Activated CD4-positive, alpha-beta T cell treated with anti-CD3 and anti-CD28 coated beads for 36 hours (primary cell): ENCODE measurements at regions of chr7 and their contacts with region 1.

Region 1: DNA sequence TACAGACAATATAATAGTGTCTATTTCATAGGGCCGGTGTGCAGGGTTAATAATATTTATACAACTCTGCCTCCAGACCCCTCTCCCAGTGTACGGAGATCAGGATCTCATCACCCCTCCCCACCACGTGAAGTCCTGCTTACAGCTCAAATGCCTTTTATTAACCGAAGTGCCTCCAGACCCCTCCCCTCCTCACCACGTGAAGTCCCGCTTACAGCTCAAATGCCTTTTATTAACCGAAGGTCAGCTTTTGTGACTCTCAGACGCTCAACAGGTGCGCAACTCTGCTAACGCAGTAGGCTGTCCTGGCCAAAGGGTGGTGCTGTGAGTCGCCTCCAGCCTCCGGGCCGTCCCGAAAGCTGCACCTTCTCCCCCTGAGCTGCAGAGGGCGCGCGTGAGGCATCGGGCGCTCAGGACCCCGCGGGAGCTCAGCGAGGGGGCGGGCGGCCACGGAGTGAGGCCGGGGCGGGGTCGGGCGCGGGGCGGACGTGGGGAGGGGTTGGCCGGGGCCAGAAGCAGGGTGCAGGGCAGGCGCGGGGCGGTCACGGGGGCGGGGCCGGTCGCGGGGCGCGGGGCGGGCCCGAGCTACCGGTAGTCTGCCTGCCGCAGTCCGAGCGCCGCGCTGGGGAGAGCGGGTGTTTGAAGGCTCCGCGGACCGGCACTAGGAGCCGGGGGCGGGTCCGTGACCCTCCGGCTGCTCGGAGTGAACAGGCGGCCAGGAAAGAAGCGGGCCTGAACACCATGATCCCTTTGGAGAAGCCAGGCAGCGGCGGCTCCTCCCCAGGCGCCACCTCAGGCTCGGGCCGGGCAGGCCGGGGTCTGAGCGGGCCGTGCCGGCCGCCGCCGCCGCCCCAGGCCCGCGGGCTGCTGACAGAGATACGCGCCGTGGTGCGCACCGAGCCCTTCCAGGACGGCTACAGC is at the start of gene STK17A:
- DNase-seq: peak; percentile 96
- ATAC-seq: peak; percentile 77
- H3K4me3 Mint-ChIP-seq: peak within 1 kb of the TSS; percentile 99
- H3K27ac Mint-ChIP-seq: peak within 1 kb of the TSS; percentile 97
- H3K4me1 Mint-ChIP-seq: peaks cover 29% of the 10 kb centered on the region
- H3K27me3 Mint-ChIP-seq: peaks cover 6% of the 10 kb centered on the region
- total RNA-seq, gene STK17A: 43.2 to 50.9 TPM

Region 2: DNA sequence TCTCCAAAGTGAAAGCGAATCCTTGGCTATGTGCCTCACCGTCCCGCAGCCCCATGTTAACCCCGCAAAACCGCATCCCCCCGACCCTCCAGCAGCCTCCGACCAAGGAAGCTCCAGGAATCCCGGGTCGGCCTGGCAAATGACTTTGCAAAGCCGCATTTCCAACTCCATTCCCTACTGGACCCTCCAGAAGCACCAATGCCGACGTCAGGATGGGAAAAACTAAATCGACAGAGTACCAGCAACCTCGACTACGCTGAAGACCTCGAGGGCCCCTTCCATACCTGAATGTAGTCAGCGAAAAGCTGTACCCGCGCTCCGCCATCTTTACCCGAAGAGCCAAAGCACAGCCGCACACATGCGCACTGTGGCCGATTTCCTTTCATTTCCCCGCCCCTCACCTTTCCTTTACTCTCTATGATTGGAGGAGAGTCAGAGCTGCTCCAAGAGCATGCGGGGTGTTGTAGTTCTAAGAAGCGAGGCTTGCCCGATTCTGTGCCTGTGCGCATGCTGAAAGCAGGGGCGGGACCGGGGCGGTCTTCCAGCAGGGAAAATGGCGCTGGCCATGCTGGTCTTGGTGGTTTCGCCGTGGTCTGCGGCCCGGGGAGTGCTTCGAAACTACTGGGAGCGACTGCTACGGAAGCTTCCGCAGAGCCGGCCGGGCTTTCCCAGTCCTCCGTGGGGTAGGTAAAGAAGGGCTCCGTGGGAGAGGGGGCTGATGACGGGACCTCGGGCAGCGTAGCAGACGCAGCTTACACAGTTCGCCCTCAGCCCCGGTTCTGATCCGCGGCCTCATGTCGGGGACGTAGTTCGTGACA is 650.7 kb before region 1 on chr7 and contains the starts of genes MRPL32 and PSMA2:
- CTCF ChIA-PET with region 1: no interaction called
- POLR2A ChIA-PET with region 1: no interaction called
- intact Hi-C with region 1: loop called in 1 of 2 experiments (anchors 1 kb)
- DNase-seq: peak; percentile 95
- ATAC-seq: peak; percentile 100
- H3K4me3 Mint-ChIP-seq: peak within 1 kb of the TSS; percentile 98
- H3K27ac Mint-ChIP-seq: peak within 1 kb of the TSS; percentile 100
- H3K4me1 Mint-ChIP-seq: peaks cover 67% of the 10 kb centered on the region
- H3K27me3 Mint-ChIP-seq: no peaks in the 10 kb centered on the region
- total RNA-seq, gene MRPL32: 74.7 to 75.5 TPM
- total RNA-seq, gene PSMA2: 109 to 217 TPM

Region 3: DNA sequence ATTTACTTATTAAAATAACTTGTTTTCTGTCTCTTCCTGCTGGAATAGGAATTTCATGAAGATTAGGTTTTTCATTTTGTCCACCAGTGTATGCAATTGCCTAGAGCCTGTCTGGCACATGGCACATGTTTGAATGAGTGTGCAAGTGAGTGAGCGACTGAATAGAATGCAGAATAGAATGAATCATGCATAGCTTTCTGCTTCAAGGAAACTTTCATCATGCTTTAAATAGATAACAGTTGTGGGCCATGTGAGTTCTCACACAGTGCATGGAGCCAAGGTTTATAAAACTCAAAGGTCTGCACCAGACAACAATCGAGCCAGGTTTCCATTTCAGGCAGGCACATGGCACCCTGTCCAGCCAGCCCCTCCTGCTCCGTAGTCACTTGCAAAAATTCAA is 544.5 kb before region 1 on chr7:
- CTCF ChIA-PET with region 1: no interaction called
- POLR2A ChIA-PET with region 1: no interaction called
- intact Hi-C with region 1: no loop called
- DNase-seq: no peak
- ATAC-seq: no peak
- H3K4me3 Mint-ChIP-seq: no peak overlapping the region
- H3K27ac Mint-ChIP-seq: no peak overlapping the region
- H3K4me1 Mint-ChIP-seq: no peaks in the 10 kb centered on the region
- H3K27me3 Mint-ChIP-seq: peaks cover 15% of the 10 kb centered on the region

Region 4: DNA sequence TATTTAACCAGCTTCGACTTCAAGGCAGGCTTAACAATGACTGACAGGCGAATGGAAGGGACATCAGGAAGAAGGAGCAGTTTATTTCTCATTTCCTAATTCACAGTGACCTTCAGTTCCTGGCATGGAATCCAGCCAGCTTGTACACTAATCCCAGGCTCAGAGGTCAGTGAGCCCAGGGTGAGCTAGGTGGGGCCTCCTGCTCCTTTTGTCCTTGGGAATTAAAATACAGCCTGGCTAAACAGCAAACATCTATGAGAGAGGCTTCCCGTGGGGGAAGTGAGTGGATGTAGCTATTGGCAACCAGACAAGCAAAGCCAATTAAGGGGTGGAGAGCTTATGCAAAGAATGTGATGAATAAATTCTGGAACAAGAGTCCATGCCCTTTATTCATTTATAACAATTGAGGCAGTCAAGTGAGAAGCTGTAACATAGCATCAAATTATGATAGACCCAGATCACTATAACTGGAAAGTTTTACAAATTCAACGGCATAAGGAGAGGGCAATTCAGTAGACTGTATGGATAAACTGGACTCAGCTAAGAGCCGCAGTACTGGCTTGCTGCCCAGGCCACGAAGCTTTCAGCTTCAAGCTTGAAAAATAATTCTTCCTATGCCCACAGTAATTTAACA is 57.2 kb after region 1 on chr7:
- CTCF ChIA-PET with region 1: interaction called, 60 read pairs
- POLR2A ChIA-PET with region 1: no interaction called
- intact Hi-C with region 1: no loop called
- DNase-seq: no peak
- ATAC-seq: no peak
- H3K4me3 Mint-ChIP-seq: no peak overlapping the region
- H3K27ac Mint-ChIP-seq: peak overlapping the region; percentile 76
- H3K4me1 Mint-ChIP-seq: peaks cover 90% of the 10 kb centered on the region
- H3K27me3 Mint-ChIP-seq: no peaks in the 10 kb centered on the region

Region 5: GRCh38 chr7:43674584-43675436 is 92.0 kb after region 1 on chr7:
- CTCF ChIA-PET with region 1: interaction called, 20 read pairs
- POLR2A ChIA-PET with region 1: interaction called, 8 read pairs
- intact Hi-C with region 1: no loop called
- DNase-seq: no peak
- ATAC-seq: no peak
- H3K4me3 Mint-ChIP-seq: no peak overlapping the region
- H3K27ac Mint-ChIP-seq: peak overlapping the region; percentile 65
- H3K4me1 Mint-ChIP-seq: peaks cover 80% of the 10 kb centered on the region
- H3K27me3 Mint-ChIP-seq: no peaks in the 10 kb centered on the region

Region 6: DNA sequence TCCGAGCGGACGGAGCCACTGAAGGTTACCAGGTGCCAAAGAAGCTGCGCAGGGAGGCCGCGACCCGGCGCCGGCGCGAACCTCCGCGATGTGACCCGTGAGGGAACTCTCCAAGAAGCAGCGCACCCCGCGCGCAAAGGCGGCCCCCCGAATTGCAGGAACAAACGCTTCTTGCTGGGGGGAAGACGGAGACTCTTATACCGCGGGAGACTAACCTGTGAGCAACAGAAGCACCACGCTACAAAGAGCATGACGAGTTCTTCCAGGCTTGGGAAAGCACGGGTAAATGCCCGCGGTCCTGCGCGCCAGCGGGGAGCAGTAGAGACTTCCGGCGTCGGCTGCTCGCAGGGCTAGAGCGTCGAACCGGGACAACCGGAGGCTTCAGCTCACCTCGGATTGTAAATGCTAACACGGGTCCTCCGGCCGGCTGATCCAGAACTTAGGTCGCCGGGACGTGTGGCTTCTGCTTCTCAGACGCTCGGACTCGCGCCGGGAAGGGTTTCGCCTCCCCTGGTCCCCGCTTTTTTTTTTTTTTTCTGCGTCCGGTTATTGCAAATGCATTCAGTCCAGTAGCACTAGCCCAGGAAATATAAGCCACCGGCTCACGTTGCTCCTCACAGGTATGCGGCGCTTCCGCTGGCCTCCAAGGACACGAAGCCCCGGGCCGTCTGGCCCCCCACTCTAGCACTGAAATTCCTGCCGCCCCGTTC is 146.6 kb after region 1 on chr7 and contains the start of gene COA1:
- CTCF ChIA-PET with region 1: interaction called, 43 read pairs
- POLR2A ChIA-PET with region 1: interaction called, 4 read pairs
- intact Hi-C with region 1: loop called (anchors 1 to 2 kb)
- DNase-seq: peak; percentile 89
- ATAC-seq: peak; percentile 94
- H3K4me3 Mint-ChIP-seq: peak within 1 kb of the TSS; percentile 90
- H3K27ac Mint-ChIP-seq: peak within 1 kb of the TSS; percentile 91
- H3K4me1 Mint-ChIP-seq: peaks cover 36% of the 10 kb centered on the region
- H3K27me3 Mint-ChIP-seq: no peaks in the 10 kb centered on the region
- total RNA-seq, gene COA1: 76.9 to 77.1 TPM

Region 7: DNA sequence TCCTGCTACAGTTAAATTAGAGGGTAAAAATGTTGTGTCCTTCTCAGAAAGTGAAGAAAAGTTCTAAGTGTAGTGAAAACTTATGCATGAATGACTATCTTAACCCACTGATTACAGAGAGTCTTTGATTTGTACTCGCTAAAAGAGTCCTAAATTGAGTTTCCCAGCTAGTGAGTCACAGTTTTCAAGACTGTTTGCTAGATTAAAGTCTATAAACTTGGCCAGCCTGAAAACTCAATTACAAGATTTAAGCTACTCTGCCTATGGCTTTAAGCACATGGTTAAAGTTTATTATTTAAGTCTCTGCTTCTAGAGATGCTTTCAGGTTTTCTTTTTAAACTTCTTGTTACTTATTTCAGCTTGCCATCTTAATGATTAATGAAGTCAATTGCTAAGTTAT is 242.2 kb after region 1 on chr7:
- CTCF ChIA-PET with region 1: interaction called, 10 read pairs
- POLR2A ChIA-PET with region 1: no interaction called
- intact Hi-C with region 1: no loop called
- DNase-seq: no peak
- ATAC-seq: peak; percentile 49
- H3K4me3 Mint-ChIP-seq: no peak overlapping the region
- H3K27ac Mint-ChIP-seq: no peak overlapping the region
- H3K4me1 Mint-ChIP-seq: peaks cover 2% of the 10 kb centered on the region
- H3K27me3 Mint-ChIP-seq: peaks cover 39% of the 10 kb centered on the region

Region 8: DNA sequence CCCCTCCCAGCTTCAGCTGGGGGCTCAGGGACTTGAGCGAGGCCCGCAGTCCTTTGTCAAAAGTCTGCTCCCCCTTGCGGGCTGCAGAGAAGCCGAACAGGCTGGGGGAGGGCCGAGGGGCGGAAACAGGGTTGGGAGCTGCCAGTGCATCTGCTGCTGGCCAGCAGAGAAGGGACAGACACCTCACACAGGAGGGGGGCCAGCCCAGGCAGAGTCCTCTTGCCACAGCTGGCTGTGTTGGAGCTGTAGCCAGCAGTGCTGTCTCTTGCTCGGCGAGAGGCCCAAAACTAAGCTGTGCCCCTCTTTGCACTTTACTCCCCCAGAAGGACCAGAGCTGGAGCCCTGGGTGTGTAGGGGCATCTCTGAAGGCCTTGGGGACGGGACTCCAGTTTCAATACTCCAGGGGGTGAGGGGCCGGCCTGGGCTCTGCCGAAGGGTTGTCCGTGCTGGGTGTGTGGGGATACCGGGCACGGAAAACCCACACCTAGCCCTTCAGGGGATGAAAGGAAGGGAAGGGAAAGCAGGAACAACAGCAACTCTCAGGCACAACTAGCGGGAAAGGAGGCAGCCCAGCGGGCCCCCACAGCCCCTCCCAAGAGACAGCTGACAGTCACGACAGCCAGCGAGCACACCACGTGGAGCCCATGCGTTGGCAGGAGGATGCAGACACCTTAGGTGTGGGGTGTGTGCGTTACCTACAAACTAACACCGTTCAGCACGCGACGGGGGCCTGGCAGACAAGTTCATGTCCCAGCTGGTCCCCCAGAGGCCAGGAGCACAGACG is 635.8 kb after region 1 on chr7:
- CTCF ChIA-PET with region 1: no interaction called
- POLR2A ChIA-PET with region 1: no interaction called
- intact Hi-C with region 1: no loop called
- DNase-seq: no peak
- ATAC-seq: no peak
- H3K4me3 Mint-ChIP-seq: no peak overlapping the region
- H3K27ac Mint-ChIP-seq: no peak overlapping the region
- H3K4me1 Mint-ChIP-seq: no peaks in the 10 kb centered on the region
- H3K27me3 Mint-ChIP-seq: no peaks in the 10 kb centered on the region